Calu3 (cell line): ENCODE measurements at regions of chr13 and their contacts with region 1.

Region 1: DNA sequence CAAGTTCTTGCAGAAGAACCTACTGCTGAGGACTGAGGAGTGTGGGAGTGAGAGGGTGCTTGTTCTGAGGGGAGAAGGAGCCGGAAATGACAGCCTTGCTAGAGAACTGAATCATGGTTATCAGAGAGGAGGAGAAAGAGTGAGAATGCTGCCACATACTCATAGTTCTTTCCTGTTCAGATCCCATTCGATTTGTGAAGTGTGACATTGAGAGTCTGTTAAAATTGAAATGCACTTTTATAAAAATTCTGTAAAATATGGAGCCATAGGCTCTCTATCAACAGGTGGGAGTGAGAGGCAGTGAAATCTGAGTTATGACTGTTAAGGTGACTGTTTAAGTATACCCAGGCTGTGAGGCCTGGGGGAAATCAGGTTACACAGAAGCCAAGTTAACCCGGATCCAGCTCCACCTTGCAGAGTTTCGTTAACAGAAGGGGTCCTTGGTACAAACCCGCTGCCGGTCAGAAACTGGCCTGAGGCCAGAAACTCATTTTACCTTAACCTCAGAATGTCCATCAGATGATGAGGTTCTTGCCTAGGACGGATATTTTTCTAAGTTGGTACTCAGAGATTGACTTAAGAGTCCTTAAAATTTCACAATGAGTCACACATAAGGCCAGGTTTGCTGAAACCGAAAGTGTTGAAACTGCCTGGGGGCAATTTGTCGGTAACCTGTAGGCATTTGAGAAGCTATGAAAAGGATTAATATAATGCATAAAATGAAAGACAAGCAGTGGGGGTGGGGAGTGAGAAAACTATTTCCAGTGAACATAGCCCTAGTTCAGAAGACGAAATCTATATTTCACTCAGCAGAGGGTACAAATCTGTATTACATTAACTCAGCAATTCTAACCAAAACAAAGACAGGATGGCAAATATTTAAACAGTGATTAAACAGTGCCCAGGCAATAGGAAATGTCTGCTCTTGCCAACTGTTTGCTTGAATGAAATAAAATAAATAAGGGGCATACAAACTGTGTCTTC is 350.5 kb downstream of the KCNRG start:
- DNase-seq: peak; percentile 68
- H3K4me3 Mint-ChIP-seq: peak overlapping the region; percentile 59
- H3K27ac Mint-ChIP-seq: peak overlapping the region; percentile 68
- H3K4me1 Mint-ChIP-seq: peaks cover 27% of the 10 kb centered on the region
- H3K27me3 Mint-ChIP-seq: no peaks in the 10 kb centered on the region
- CTCF ChIP-seq: no peak

Region 2: DNA sequence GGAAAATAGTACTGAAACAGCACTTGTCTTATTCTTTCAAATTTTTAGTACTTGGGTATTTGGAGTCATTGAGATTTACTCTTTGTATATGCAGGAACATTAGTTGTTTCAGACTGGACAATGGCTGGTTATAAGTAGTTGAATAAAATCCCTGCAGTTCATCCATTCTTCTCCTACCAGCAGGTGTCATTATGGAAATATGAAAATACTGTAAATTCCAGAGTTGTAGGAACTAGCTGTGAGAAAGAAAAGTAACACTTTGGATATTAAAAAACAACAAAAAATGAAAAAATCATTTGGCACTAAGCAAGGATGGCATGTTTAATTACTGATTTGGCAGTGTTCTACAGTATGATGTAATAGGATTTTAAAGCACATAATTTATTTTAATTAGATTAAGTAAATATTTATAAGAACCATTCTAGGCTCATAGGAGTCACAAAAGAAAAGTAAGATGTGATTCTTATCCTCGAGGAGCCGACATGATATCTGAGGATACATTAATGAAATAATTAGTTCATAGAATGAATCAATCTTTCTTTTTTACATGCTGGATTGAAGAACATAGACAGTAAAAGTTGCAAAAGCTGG is 195.2 kb before region 1 on chr13:
- CTCF ChIA-PET with region 1: no interaction called
- intact Hi-C with region 1: loop called (anchors 10 kb)
- DNase-seq: no peak
- H3K4me3 Mint-ChIP-seq: no peak overlapping the region
- H3K27ac Mint-ChIP-seq: no peak overlapping the region
- H3K4me1 Mint-ChIP-seq: no peaks in the 10 kb centered on the region
- H3K27me3 Mint-ChIP-seq: no peaks in the 10 kb centered on the region
- CTCF ChIP-seq: no peak

Region 3: GRCh38 chr13:50244713-50245574 is 120.8 kb before region 1 on chr13:
- CTCF ChIA-PET with region 1: no interaction called
- intact Hi-C with region 1: loop called (anchors 10 kb)
- DNase-seq: peak; percentile 59
- H3K4me3 Mint-ChIP-seq: no peak overlapping the region
- H3K27ac Mint-ChIP-seq: peak overlapping the region; percentile 75
- H3K4me1 Mint-ChIP-seq: peaks cover 39% of the 10 kb centered on the region
- H3K27me3 Mint-ChIP-seq: no peaks in the 10 kb centered on the region
- CTCF ChIP-seq: no peak

Region 4: GRCh38 chr13:50531917-50532899 is 166.5 kb after region 1 on chr13:
- CTCF ChIA-PET with region 1: no interaction called
- intact Hi-C with region 1: loop called (anchors 10 kb)
- DNase-seq: no peak
- H3K4me3 Mint-ChIP-seq: no peak overlapping the region
- H3K27ac Mint-ChIP-seq: no peak overlapping the region
- H3K4me1 Mint-ChIP-seq: peaks cover 11% of the 10 kb centered on the region
- H3K27me3 Mint-ChIP-seq: no peaks in the 10 kb centered on the region
- CTCF ChIP-seq: no peak